CD4-positive, alpha-beta memory T cell (primary cell): ENCODE measurements at regions of chr13 and their contacts with region 1.

Region 1: GRCh38 chr13:77329133-77329910 is 2.4 kb upstream of the MYCBP2 start:
- DNase-seq: peak; percentile 89 to 95 (median 93)
- H3K4me3 ChIP-seq: peak overlapping the region; percentile 73 to 78
- H3K4me3 Mint-ChIP-seq: peak overlapping the region; percentile 89 to 100 (median 96)
- H3K27ac ChIP-seq: peak overlapping the region; percentile 62
- H3K27ac Mint-ChIP-seq: peak overlapping the region; percentile 84 to 99 (median 93)
- H3K4me1 ChIP-seq: peaks cover 40% of the 10 kb centered on the region
- H3K4me1 Mint-ChIP-seq: peaks cover 19 to 57% (median 37%) of the 10 kb centered on the region in 4 donors
- H3K27me3 ChIP-seq: no peaks in the 10 kb centered on the region
- H3K27me3 Mint-ChIP-seq: no peaks in the 10 kb centered on the region

Region 2: GRCh38 chr13:75549262-75550158 is 1779.8 kb before region 1 on chr13 and contains the start of gene UCHL3:
- CTCF ChIA-PET with region 1: no interaction called
- POLR2A ChIA-PET with region 1: no interaction called
- intact Hi-C with region 1: loop called (anchors 10 kb)
- DNase-seq: peak; percentile 95 to 97 (median 97)
- H3K4me3 ChIP-seq: peak within 1 kb of the TSS; percentile 73 to 78
- H3K4me3 Mint-ChIP-seq: peak within 1 kb of the TSS; percentile 93 to 98 (median 97)
- H3K27ac ChIP-seq: peak within 1 kb of the TSS; percentile 83
- H3K27ac Mint-ChIP-seq: peak within 1 kb of the TSS; percentile 94 to 99 (median 99)
- H3K4me1 ChIP-seq: peaks cover 30% of the 10 kb centered on the region
- H3K4me1 Mint-ChIP-seq: peaks cover 26 to 46% (median 36%) of the 10 kb centered on the region in 4 donors
- H3K27me3 ChIP-seq: no peaks in the 10 kb centered on the region
- H3K27me3 Mint-ChIP-seq: no peaks in the 10 kb centered on the region
- total RNA-seq, gene UCHL3: 17.5 to 20.2 TPM

Region 3: DNA sequence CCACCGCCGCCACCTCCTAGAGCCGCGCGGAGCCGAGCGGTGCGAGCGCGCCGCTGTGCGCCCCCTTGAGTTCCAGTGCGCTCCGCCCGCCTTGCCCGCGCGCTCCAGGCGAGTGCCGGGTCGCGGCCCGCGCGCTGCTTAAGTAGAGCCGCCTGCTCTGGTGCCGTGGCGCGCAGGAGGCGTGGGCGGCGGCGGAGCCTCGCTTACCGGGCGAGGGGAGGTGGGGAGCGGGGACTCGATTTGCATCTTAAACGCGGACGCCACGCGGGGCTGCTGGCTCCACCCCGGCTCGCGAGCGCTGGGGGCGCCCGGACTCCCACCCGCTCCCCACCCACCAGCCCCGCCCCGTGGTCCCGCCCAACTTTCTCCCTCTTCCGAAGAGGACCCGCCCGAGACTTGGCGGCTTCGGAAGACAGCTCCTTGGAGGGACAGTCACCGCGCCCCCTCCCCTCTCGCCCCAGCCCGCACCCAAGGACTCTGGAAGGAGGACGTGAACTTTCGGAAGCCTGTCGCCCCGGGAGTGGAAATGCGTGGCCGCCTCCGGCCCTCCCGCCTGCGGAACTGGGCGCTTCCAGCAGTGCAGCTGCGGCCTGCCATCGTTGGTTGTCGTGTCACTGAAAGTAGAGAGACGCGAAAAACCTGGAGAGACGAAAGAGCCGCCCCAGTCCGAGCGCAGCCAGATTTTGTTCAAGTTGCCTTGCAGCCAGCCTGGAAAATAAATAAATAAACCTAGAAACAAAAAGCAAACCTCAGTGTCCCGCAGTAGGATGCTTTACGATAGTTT is 442.8 kb before region 1 on chr13 and contains the start of gene KCTD12:
- CTCF ChIA-PET with region 1: no interaction called
- POLR2A ChIA-PET with region 1: interaction called, 6 read pairs
- intact Hi-C with region 1: loop called (anchors 5 kb)
- DNase-seq: peak; percentile 65 to 80 (median 70)
- H3K4me3 ChIP-seq: peak within 1 kb of the TSS; percentile 29 to 80
- H3K4me3 Mint-ChIP-seq: peak within 1 kb of the TSS; percentile 86 to 92 (median 88)
- H3K27ac ChIP-seq: peak within 1 kb of the TSS; percentile 27
- H3K27ac Mint-ChIP-seq: peak within 1 kb of the TSS in 6 of 7 donors; percentile 32 to 87 (median 70)
- H3K4me1 ChIP-seq: peaks cover 16% of the 10 kb centered on the region
- H3K4me1 Mint-ChIP-seq: peaks cover 15 to 46% (median 25%) of the 10 kb centered on the region in 4 donors
- H3K27me3 ChIP-seq: no peaks in the 10 kb centered on the region
- H3K27me3 Mint-ChIP-seq: peaks cover 2 to 5% of the 10 kb centered on the region in 2 donors
- total RNA-seq, gene KCTD12: 9.3 to 9.6 TPM

Region 4: GRCh38 chr13:77274126-77274525 is 55.2 kb before region 1 on chr13:
- CTCF ChIA-PET with region 1: interaction called, 3 read pairs
- POLR2A ChIA-PET with region 1: interaction called, 3 read pairs
- intact Hi-C with region 1: loop called (anchors 2 kb)
- DNase-seq: no peak
- H3K4me3 ChIP-seq: no peak overlapping the region
- H3K4me3 Mint-ChIP-seq: no peak overlapping the region
- H3K27ac ChIP-seq: no peak overlapping the region
- H3K27ac Mint-ChIP-seq: peak overlapping the region in 1 of 7 donors; percentile 4
- H3K4me1 ChIP-seq: no peaks in the 10 kb centered on the region
- H3K4me1 Mint-ChIP-seq: peaks cover 0 to 23% (median 8%) of the 10 kb centered on the region in 4 donors
- H3K27me3 ChIP-seq: no peaks in the 10 kb centered on the region
- H3K27me3 Mint-ChIP-seq: no peaks in the 10 kb centered on the region

Region 5: DNA sequence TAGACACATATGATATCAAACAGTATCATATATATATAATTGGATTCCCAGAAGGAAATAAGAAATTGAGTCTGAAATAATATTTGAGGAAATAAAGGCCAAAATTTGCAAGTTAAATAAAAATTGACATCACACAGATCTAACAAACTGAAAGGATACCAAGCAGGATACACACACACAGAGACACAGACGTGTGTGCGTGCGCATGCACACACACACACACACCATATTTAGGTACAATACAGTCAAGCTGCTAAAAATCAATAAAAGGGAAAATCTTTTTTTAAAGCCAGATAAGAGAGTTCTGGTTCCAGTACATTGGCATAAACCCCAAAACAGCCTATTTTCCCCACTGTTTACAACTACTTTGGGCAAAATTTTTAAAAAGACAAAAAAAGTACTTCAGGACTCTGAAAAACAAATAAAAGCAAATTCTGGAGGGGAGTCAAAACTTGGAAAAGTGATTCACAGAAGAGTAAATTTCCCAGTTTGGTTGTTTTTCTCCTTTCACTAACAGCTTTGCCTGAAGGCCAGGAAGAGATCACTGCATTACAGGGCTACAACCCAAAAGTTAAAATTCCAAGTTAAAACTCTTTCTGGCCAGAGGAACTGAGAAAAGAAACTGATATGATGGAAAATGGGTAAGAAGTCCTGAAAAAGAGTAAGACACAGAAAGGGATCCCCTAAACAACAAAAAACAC is 18.6 kb before region 1 on chr13:
- CTCF ChIA-PET with region 1: interaction called, 10 read pairs
- POLR2A ChIA-PET with region 1: interaction called, 13 read pairs
- intact Hi-C with region 1: loop called (anchors 2 kb)
- DNase-seq: no peak
- H3K4me3 ChIP-seq: no peak overlapping the region
- H3K4me3 Mint-ChIP-seq: peak overlapping the region in 6 of 8 donors; percentile 26 to 73 (median 53)
- H3K27ac ChIP-seq: no peak overlapping the region
- H3K27ac Mint-ChIP-seq: peak overlapping the region in 4 of 7 donors; percentile 9 to 64 (median 38)
- H3K4me1 ChIP-seq: peaks cover 94% of the 10 kb centered on the region
- H3K4me1 Mint-ChIP-seq: peaks cover 75 to 92% (median 86%) of the 10 kb centered on the region in 4 donors
- H3K27me3 ChIP-seq: no peaks in the 10 kb centered on the region
- H3K27me3 Mint-ChIP-seq: no peaks in the 10 kb centered on the region

Region 6: GRCh38 chr13:77390391-77390790 is 61.1 kb after region 1 on chr13:
- CTCF ChIA-PET with region 1: interaction called, 3 read pairs
- POLR2A ChIA-PET with region 1: interaction called, 5 read pairs
- intact Hi-C with region 1: loop called (anchors 5 kb)
- DNase-seq: no peak
- H3K4me3 ChIP-seq: no peak overlapping the region
- H3K4me3 Mint-ChIP-seq: no peak overlapping the region
- H3K27ac ChIP-seq: no peak overlapping the region
- H3K27ac Mint-ChIP-seq: no peak overlapping the region
- H3K4me1 ChIP-seq: peaks cover 12% of the 10 kb centered on the region
- H3K4me1 Mint-ChIP-seq: peaks cover 16 to 25% (median 18%) of the 10 kb centered on the region in 4 donors
- H3K27me3 ChIP-seq: no peaks in the 10 kb centered on the region
- H3K27me3 Mint-ChIP-seq: peaks cover 2 to 5% of the 10 kb centered on the region in 2 donors

Region 7: DNA sequence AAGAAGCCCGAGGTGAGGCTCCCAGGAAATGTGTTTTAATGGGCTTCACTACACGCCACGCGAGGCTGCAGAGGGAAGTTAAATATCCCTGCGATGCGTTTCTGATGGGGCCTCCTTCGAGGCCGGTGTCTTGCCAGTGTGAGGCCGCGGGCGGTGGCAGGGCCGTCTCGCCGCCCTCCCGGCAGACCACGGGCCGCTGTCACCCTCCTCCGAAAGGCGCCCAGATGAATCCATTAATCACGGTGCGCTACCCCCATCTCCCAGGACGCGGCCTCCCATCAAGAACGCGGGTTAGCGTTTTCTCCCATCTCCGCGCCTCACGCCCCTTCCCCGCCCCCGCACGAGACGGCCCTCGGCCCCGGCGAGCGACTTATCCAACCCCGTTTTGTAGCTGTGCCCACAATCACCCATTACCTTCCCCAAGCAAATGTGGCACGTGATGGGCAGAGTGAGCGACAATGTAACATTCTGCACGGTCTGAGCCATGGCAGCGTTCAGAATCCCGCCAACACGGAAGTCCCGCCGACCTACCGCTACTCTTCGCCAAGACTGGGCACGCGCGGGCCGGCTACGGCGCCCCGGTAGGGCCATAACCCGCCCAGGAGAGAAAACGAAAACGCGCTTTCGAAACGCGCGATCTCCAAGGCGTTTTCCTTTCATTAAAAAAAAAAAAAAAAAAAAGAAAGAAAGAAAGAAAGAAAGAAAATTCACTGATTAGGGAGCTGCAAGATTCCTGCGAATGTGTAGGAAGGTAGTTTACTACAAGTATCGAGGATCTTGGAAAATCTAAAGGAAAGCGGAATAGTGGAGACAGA is 1329.5 kb after region 1 on chr13 and contains the start of gene OBI1:
- CTCF ChIA-PET with region 1: no interaction called
- POLR2A ChIA-PET with region 1: no interaction called
- intact Hi-C with region 1: loop called (anchors 5 kb)
- DNase-seq: peak; percentile 89 to 91 (median 89)
- H3K4me3 ChIP-seq: peak within 1 kb of the TSS; percentile 84 to 94
- H3K4me3 Mint-ChIP-seq: peak within 1 kb of the TSS; percentile 98 to 100 (median 100)
- H3K27ac ChIP-seq: peak within 1 kb of the TSS; percentile 73
- H3K27ac Mint-ChIP-seq: peak within 1 kb of the TSS; percentile 87 to 99 (median 98)
- H3K4me1 ChIP-seq: peaks cover 24% of the 10 kb centered on the region
- H3K4me1 Mint-ChIP-seq: peaks cover 23 to 42% (median 37%) of the 10 kb centered on the region in 4 donors
- H3K27me3 ChIP-seq: no peaks in the 10 kb centered on the region
- H3K27me3 Mint-ChIP-seq: peaks cover 0 to 2% of the 10 kb centered on the region in 2 donors
- total RNA-seq, gene OBI1: 16.3 to 16.7 TPM